HEK293T (cell line): ENCODE measurements at regions of chr10 and their contacts with region 1.

Region 1: DNA sequence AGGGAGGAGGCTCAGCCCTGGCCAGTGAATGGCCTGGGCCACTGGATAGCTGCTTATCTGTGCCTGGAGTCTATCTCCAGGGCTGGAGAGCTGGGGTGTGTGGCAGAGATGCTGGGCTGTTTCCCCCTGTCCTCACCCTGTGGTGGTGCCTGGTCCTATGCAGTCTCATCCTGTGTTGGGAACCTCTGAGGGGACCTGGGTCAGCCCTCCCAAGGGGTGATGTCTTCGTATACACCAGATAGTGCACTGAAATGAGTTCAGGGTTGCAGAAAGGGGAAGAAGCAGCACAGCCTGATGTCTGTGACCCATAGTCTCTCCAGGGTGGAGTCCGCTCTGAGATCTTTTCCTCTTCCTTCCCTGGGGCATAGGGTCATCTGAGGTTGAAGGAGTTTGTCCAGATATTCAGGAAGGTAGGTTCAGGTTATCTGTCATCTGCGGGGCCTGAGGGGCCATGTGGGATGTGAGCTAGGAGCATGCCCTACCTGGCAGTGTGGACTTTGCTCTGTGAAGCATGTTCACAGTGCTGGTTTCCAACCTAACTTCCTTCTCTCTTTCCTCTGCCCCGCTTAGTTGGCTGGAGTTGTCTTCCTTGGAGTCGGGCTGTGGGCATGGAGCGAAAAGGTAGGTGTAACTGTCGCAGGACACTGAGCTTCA is 33.4 kb upstream of the SH2D4B start:
- DNase-seq: no peak

Region 2: GRCh38 chr10:80444646-80445319 is 59.5 kb before region 1 on chr10:
- CTCF ChIA-PET with region 1: interaction called, 47 read pairs
- POLR2A ChIA-PET with region 1: interaction called, 3 read pairs
- DNase-seq: peak; percentile 77

Region 3: GRCh38 chr10:80453701-80454513 is 50.4 kb before region 1 on chr10 and contains the start of gene TSPAN14:
- CTCF ChIA-PET with region 1: interaction called, 20 read pairs
- POLR2A ChIA-PET with region 1: interaction called, 3 read pairs
- DNase-seq: peak; percentile 83

Region 4: DNA sequence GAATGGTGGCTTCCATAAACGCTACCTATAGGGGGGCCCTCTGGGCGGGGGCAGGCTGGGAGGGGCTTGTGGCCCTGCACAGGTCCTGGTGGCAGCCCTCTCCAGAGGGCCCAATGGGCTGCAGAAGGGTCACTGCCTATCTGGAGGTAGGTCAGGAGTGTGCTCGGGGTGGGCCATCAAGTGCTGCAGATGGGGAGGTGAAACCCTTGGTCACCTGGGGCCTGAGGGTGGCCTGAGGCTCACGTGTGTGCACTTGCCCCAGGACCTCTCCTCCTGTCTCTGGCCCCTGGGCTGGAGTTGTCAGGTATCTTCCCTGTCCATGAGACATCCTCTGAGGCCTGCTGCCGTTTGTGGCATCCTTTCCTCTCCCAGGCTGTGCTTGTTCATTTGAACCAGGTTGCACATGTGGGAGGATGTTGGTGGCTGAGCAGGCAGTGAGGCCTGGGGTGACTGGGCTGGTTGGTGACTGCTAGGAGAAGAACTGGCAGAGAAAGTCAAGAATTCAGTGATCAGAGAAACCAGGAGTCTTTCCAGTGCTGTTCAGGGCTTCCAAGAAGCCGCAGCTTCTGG is 12.3 kb after region 1 on chr10:
- CTCF ChIA-PET with region 1: interaction called, 13 read pairs
- POLR2A ChIA-PET with region 1: no interaction called
- DNase-seq: no peak